ENCODE measurements at regions of chr1 and their contacts with region 1.

Region 1: GRCh38 chr1:156625436-156626078 is 6.3 kb downstream of the HAPLN2 start:
- DNase-seq: peak; percentile 51 to 82 (median 73)
- ATAC-seq: peak; percentile 58
- H3K4me3 ChIP-seq: peak overlapping the region; percentile 52
- H3K27ac ChIP-seq: peak overlapping the region; percentile 69
- H3K4me1 ChIP-seq: peaks cover 0 to 25% of the 10 kb centered on the region in 2 experiments; a peak in 4 of 5 replicates
- H3K27me3 ChIP-seq: no peaks in the 10 kb centered on the region; a peak in 2 of 5 replicates
- CTCF ChIP-seq: peak; percentile 77 to 89 (median 82)
- EP300 ChIP-seq: no peak
- POLR2A ChIP-seq: no peak
- RAD21 ChIP-seq: peak; percentile 59 to 76

Region 2: DNA sequence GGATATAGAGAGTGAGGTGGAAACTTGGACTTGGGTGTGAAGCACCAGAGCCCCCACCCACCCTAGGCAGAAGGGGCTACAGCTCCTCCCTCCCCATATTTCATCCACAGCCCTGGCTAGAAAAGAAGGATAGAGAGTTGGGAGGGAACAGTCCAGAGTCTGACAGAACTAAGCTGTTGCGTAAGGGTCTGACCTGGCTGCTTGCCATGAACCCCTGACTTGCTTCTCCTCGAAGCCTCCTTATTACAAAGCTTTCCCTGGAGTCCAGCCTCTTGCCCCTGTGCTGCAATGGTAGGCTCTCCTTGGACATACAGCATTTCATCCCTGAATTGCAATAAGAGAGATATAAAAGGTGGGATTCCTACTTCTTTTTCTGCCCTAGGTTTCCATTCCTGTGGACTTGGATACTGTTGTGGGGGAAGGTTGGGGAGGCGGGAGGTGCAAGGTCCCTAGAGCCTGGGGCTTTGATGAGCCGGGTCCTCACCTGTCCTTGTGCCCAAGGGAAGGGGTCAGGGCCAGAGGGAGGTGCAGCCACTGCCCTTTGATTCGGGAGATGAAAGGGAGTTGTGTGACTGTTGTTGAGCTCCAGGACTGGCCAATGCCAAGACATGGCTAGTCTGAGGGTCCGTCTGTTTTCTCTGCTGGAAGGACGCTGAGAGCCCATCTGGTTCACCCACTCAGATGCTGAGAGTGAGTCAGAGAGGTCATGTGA is 253.8 kb before region 1 on chr1:
- CTCF ChIA-PET with region 1: no interaction called
- POLR2A ChIA-PET with region 1: no interaction called
- in situ Hi-C with region 1: no loop called
- intact Hi-C with region 1: no loop called
- DNase-seq: peak in 1 of 4 experiments; percentile 37
- ATAC-seq: peak; percentile 40; the same call in 2 of the 3 replicates
- H3K4me3 ChIP-seq: no peak overlapping the region
- H3K27ac ChIP-seq: no peak overlapping the region
- H3K4me1 ChIP-seq: peaks cover 0 to 16% of the 10 kb centered on the region in 2 experiments; a peak in 3 of 5 replicates
- H3K27me3 ChIP-seq: peaks cover 0 to 19% of the 10 kb centered on the region in 2 experiments; a peak in 4 of 5 replicates
- CTCF ChIP-seq: no peak
- EP300 ChIP-seq: no peak
- POLR2A ChIP-seq: no peak
- RAD21 ChIP-seq: no peak

Region 3: DNA sequence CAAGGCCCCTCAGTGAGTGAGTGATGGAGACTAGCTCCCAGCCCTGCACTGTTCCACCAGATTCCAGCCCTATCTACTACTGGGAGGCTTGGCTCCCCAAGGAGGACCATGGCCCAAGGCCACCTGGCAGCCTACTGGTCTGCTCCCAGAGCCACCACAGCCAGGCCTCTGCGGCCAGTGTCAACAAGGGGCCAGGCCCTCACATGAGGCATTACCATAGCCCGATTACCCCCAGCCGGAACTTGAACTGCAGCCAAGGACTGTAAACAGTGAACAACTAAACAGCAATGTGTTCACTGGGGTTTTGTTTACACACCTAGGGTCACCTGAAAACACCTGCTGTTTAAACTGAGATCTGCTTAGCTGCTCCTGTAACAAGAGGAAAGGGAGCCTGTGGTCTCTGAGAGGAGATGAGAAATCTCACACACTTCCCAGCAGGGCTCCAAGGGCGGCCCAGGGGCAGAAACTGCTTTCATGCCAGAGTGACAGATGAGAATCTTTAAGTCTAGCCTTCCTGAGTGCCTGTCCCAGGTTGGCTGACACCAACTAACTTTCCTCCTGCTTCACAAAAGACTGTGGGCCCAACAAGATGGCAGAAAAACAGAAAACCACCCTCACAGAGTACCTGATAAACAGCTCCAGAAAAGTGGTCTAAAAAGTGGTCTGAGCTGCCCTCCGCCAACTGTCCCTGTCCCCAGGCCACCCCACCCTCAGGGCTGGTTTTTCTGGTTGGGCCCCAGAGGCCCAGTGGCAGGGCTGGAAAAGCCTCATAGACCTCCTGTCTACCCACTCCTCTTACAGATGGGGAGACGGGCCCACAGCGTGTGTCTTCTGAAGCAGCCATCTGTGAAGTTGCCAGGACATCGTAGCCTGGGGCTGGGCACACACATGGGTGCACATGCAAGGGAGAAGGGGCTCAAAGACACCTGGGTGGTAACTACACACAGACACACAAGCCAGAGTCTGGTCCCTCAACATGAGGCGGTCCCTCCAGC is 153.8 kb before region 1 on chr1:
- CTCF ChIA-PET with region 1: no interaction called
- POLR2A ChIA-PET with region 1: no interaction called
- in situ Hi-C with region 1: no loop called
- intact Hi-C with region 1: no loop called
- DNase-seq: no peak
- ATAC-seq: no peak; the same call in 2 of the 3 replicates
- H3K4me3 ChIP-seq: no peak overlapping the region
- H3K27ac ChIP-seq: no peak overlapping the region
- H3K4me1 ChIP-seq: peaks cover 0 to 7% of the 10 kb centered on the region in 2 experiments; a peak in 1 of 5 replicates
- H3K27me3 ChIP-seq: no peaks in the 10 kb centered on the region
- CTCF ChIP-seq: no peak
- EP300 ChIP-seq: no peak
- POLR2A ChIP-seq: no peak
- RAD21 ChIP-seq: no peak

Region 4: GRCh38 chr1:156583821-156584622 is 41.5 kb before region 1 on chr1:
- CTCF ChIA-PET with region 1: interaction called, 12 read pairs
- POLR2A ChIA-PET with region 1: no interaction called
- in situ Hi-C with region 1: no loop called
- intact Hi-C with region 1: no loop called
- DNase-seq: peak; percentile 77 to 89 (median 82)
- ATAC-seq: peak; percentile 81
- H3K4me3 ChIP-seq: no peak overlapping the region
- H3K27ac ChIP-seq: no peak overlapping the region
- H3K4me1 ChIP-seq: peaks cover 0 to 10% of the 10 kb centered on the region in 2 experiments; a peak in 3 of 5 replicates
- H3K27me3 ChIP-seq: no peaks in the 10 kb centered on the region
- CTCF ChIP-seq: peak; percentile 88 to 98 (median 90)
- EP300 ChIP-seq: no peak
- POLR2A ChIP-seq: no peak
- RAD21 ChIP-seq: peak; percentile 79 to 92

Region 5: DNA sequence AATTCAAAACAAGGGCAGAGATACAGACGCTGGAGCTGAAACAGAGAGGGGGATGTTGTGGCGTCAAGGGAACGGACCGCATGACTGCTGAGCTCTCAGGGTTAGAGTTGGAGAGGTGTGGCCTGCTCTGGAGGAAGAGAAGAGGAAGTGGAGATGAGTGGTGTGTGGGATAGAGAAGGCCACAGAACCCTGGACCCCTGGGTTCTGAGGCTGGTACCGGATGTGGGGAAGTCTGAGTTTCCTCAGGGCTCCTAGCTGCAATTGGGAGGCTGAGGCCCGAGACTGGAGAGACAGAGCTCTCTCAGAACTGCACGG is 18.2 kb after region 1 on chr1:
- CTCF ChIA-PET with region 1: no interaction called
- POLR2A ChIA-PET with region 1: interaction called, 21 read pairs
- in situ Hi-C with region 1: no loop called
- intact Hi-C with region 1: no loop called
- DNase-seq: no peak
- ATAC-seq: no peak
- H3K4me3 ChIP-seq: no peak overlapping the region
- H3K27ac ChIP-seq: no peak overlapping the region
- H3K4me1 ChIP-seq: peaks cover 0 to 30% of the 10 kb centered on the region in 2 experiments; a peak in 2 of 5 replicates
- H3K27me3 ChIP-seq: no peaks in the 10 kb centered on the region
- CTCF ChIP-seq: no peak
- EP300 ChIP-seq: no peak
- POLR2A ChIP-seq: no peak
- RAD21 ChIP-seq: no peak

Region 6: GRCh38 chr1:156677616-156678596 is 52.3 kb after region 1 on chr1:
- CTCF ChIA-PET with region 1: interaction called, 27 read pairs
- POLR2A ChIA-PET with region 1: no interaction called
- in situ Hi-C with region 1: no loop called
- intact Hi-C with region 1: loop called (anchors 1 kb)
- DNase-seq: peak; percentile 74 to 87 (median 78)
- ATAC-seq: peak; percentile 79
- H3K4me3 ChIP-seq: peak overlapping the region; percentile 7; the same call in 1 of the 2 replicates
- H3K27ac ChIP-seq: peak overlapping the region; percentile 53; the same call in 2 of the 3 replicates
- H3K4me1 ChIP-seq: peaks cover 22 to 44% of the 10 kb centered on the region in 2 experiments
- H3K27me3 ChIP-seq: peaks cover 6 to 9% of the 10 kb centered on the region in 2 experiments; a peak in 4 of 5 replicates
- CTCF ChIP-seq: peak; percentile 93 to 97 (median 95)
- EP300 ChIP-seq: no peak; the same call in 1 of the 2 replicates
- POLR2A ChIP-seq: no peak
- RAD21 ChIP-seq: peak; percentile 99

Region 7: GRCh38 chr1:157138220-157139051 is 512.9 kb after region 1 on chr1 and contains the start of gene ETV3:
- CTCF ChIA-PET with region 1: no interaction called
- POLR2A ChIA-PET with region 1: no interaction called
- in situ Hi-C with region 1: no loop called
- intact Hi-C with region 1: no loop called
- DNase-seq: peak; percentile 90 to 95 (median 91)
- ATAC-seq: peak; percentile 95
- H3K4me3 ChIP-seq: peak within 1 kb of the TSS; percentile 91
- H3K27ac ChIP-seq: peak within 1 kb of the TSS; percentile 89
- H3K4me1 ChIP-seq: peaks cover 24 to 31% of the 10 kb centered on the region in 2 experiments
- H3K27me3 ChIP-seq: no peaks in the 10 kb centered on the region
- CTCF ChIP-seq: no peak
- EP300 ChIP-seq: peak; percentile 26; the same call in 1 of the 2 replicates
- POLR2A ChIP-seq: peak; percentile 86
- RAD21 ChIP-seq: no peak
- polyA plus RNA-seq, gene ETV3: 3.1 to 5.4 TPM

Region 8: GRCh38 chr1:158043232-158043631 is 1417.7 kb after region 1 on chr1:
- CTCF ChIA-PET with region 1: no interaction called
- POLR2A ChIA-PET with region 1: no interaction called
- in situ Hi-C with region 1: no loop called
- intact Hi-C with region 1: no loop called
- DNase-seq: peak in 3 of 4 experiments; percentile 20 to 41 (median 30)
- ATAC-seq: peak; percentile 83
- H3K4me3 ChIP-seq: no peak overlapping the region
- H3K27ac ChIP-seq: no peak overlapping the region
- H3K4me1 ChIP-seq: peaks cover 3% of the 10 kb centered on the region in 2 experiments; a peak in 3 of 5 replicates
- H3K27me3 ChIP-seq: peaks cover 0 to 14% of the 10 kb centered on the region in 2 experiments; a peak in 2 of 5 replicates
- CTCF ChIP-seq: no peak
- EP300 ChIP-seq: no peak
- POLR2A ChIP-seq: no peak
- RAD21 ChIP-seq: no peak

Measured in K562 (cell line).